ENCODE measurements at regions of chr4 and their contacts with region 1.

Region 1: DNA sequence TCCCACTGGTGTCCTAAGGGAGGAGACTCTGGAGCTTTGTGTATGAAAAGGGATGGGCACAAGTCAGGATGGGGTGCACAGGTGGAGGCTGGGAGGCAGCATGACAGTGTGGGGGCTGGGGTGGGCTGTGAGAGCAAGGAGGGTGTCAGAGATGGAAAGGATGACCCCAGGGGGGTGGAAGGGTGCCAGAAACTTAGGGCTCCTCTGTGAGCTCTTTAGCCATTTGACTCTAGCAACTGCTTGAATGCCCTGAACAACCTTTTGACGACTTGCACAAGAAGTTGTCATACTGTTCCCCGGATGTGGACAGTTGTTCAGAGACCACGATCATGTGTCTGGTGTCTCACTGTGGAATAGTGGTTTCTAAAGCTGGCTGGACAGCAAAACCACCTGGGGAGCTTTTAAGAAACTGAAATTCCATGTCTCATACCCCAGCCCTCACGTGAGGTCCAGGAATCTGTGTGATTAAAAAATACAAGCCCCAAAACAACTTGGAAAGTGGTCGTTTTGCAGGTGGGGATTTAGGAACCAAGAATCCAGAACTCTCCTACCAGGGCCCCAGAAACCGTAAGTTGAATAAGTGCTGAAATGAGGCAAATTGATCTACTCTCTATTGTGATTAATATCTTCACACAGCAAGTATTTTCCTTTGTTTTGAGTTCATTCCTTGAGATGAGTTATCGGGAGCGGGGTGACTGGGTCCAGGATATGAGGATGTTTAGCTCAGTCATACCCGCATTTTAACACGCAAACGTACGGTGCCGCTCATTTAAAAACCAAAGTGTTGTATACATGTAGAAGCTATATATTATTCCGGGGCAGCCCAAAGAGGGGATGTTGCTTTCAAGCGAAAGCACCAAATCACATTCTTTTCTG is 3.4 kb downstream of the RHOH start:
- DNase-seq: peak; percentile 88
- H3K4me3 Mint-ChIP-seq: peak overlapping the region; percentile 85
- H3K27ac Mint-ChIP-seq: peak overlapping the region; percentile 98
- H3K4me1 Mint-ChIP-seq: peaks cover 31% of the 10 kb centered on the region
- H3K27me3 Mint-ChIP-seq: no peaks in the 10 kb centered on the region

Region 2: DNA sequence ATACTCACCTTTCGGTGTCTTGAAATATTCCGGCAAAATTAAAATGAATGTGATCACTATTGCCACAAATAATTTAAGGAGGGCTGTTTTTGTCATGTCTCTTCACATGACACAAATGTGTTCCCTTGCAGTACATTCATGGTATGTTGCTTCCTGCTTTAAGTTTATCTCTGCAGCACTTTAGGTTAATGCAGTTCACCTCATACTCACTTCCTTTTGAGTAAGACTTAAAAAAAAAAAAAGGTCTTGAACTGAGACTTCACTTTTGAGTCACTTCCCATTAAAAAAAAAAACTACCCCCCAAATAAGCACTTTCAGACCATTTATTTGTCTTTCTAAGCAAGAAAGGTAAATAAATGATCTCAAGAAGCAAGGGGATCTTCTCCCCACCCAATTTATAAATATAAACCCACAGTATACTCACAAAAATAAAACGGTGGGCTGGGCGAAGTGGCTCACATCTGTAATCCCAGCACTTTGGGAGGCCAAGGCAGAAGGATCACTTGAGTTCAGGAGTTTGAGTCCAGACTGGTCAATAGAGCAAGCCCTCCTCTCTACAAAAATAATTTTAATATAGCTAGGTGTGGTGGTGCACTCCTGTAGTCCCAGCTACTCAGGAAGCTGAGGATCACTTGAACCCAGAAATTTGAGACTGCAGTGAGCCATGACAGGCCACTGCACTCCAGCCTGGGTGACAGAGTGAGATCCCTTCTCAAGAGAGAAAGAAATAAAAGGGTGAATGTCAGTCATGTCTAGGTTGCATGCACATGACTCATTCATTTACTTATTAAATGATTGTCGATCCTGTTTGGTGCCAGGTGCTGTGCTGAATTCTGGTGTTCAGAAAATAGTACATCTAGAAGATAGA is 1167.8 kb before region 1 on chr4 and contains the start of gene TMEM156:
- CTCF ChIA-PET with region 1: no interaction called
- intact Hi-C with region 1: loop called (anchors 5 kb)
- DNase-seq: peak; percentile 65
- H3K4me3 Mint-ChIP-seq: peak within 1 kb of the TSS; percentile 77
- H3K27ac Mint-ChIP-seq: peak within 1 kb of the TSS; percentile 89
- H3K4me1 Mint-ChIP-seq: peaks cover 57% of the 10 kb centered on the region
- H3K27me3 Mint-ChIP-seq: no peaks in the 10 kb centered on the region
- total RNA-seq, gene TMEM156: 10.2 to 11.3 TPM

Region 3: GRCh38 chr4:40056716-40057585 is 143.3 kb before region 1 on chr4 and contains the start of gene N4BP2:
- CTCF ChIA-PET with region 1: interaction called, 4 read pairs
- intact Hi-C with region 1: loop called (anchors 1 kb)
- DNase-seq: peak; percentile 71
- H3K4me3 Mint-ChIP-seq: peak within 1 kb of the TSS; percentile 93
- H3K27ac Mint-ChIP-seq: peak within 1 kb of the TSS; percentile 95
- H3K4me1 Mint-ChIP-seq: peaks cover 30% of the 10 kb centered on the region
- H3K27me3 Mint-ChIP-seq: no peaks in the 10 kb centered on the region
- total RNA-seq, gene N4BP2: 17.5 to 18.8 TPM

Region 4: GRCh38 chr4:40140196-40140595 is 60.0 kb before region 1 on chr4:
- CTCF ChIA-PET with region 1: no interaction called
- intact Hi-C with region 1: no loop called
- DNase-seq: no peak
- H3K4me3 Mint-ChIP-seq: no peak overlapping the region
- H3K27ac Mint-ChIP-seq: no peak overlapping the region
- H3K4me1 Mint-ChIP-seq: peaks cover 16% of the 10 kb centered on the region
- H3K27me3 Mint-ChIP-seq: no peaks in the 10 kb centered on the region

Region 5: DNA sequence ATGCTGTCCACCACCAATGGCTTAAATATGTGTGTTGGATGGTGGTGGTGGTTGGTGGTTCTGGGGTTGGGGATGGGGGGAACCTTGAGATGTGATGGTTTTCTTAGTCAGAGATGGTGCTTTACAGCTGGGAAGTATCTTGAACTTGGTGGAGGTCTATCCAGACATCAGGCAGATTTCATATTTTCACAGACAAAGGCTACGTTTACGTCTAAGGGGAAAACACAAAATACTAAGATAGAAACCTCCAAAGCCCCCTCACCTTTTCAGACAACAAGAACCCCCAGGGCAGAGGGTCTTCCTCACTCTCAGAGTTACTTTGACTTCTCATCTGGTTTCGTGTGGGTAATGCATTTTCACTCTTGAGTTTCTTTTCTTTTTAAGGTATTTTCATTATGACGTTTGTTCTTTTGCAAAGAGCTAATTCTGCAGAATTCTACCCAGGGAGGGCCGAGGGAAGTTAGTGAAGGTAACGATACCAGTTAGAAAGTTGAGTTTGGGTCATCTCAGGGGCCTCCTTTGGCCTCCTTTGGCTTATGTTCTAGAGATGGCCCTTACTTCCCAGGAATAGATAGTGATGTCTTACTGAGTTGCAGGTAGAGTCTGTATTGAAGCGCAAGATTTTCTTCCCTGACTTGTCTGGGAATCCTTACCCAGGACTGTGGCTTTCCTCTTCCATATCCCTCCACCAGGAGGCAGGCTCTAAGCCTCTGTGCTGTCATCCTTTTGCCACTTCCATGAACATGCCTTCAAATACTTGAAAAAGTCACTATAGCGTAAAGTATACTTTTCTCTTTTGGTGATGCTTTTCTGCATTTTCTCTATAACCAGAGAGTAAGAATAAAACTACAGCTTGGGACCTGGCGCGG is 28.5 kb after region 1 on chr4:
- CTCF ChIA-PET with region 1: interaction called, 5 read pairs
- intact Hi-C with region 1: loop called (anchors 1 kb)
- DNase-seq: peak; percentile 24
- H3K4me3 Mint-ChIP-seq: peak overlapping the region; percentile 53
- H3K27ac Mint-ChIP-seq: peak overlapping the region; percentile 85
- H3K4me1 Mint-ChIP-seq: peaks cover 94% of the 10 kb centered on the region
- H3K27me3 Mint-ChIP-seq: no peaks in the 10 kb centered on the region

Region 6: DNA sequence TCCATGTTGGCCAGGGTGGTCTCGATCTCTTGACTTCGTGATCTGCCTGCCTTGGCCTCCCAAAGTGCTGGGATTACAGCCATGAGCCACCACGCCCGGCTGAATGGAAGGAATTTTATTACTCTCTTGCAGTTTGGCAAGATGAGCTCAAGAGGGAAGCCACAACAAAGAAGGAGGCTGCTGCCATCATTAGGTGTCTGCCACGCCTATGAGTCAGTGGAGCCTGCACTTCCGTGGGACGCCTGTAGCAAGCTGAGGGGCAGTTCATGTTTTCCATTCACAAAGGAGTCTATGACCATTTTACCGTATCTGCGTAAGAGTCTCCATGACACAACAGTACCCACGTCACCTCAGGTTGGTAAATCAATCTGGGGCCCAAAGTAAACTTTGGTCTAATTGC is 83.7 kb after region 1 on chr4:
- CTCF ChIA-PET with region 1: interaction called, 5 read pairs
- intact Hi-C with region 1: loop called (anchors 1 kb)
- DNase-seq: peak; percentile 94
- H3K4me3 Mint-ChIP-seq: peak overlapping the region; percentile 19
- H3K27ac Mint-ChIP-seq: peak overlapping the region; percentile 94
- H3K4me1 Mint-ChIP-seq: peaks cover 70% of the 10 kb centered on the region
- H3K27me3 Mint-ChIP-seq: no peaks in the 10 kb centered on the region

Region 7: DNA sequence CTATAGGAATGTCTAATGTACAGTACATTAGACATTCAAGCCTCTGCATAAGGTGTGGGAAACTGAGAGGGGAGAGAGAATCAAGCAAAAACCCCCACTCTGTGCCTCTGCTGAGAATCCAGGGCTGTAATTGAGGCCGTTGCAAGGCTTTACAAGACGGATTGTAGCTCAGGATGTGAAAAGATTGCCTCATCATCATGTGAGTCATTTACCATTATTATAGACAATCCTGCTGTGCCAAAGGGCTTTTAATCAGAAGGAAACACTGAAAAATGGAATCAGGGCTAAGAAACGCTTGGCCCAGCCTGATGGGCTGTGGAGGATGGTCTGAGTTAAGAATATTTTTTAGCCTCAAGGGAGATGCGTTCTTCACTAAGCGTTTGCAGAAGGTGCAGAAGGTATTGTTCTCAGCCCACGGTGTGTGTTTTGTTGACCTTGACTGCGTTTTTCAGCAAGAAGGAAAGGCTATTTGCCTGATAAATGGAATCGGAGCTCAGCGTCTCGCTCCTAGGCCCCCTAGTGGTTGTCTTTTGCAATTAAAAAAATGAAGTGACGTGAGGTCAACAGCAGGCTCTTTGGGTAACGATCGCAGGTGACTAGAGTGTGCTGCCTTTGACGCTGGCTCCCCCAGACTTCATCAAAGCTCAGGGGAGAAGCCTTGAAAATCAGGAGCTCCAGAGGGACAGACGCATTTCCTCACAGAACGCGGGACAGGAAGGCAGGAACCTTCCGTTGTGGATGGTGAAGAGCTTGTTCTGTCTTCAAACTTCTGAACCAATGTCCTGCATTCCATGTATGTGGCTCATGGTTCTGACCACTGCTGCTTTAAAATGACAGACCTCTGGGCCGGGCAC is 116.8 kb after region 1 on chr4:
- CTCF ChIA-PET with region 1: interaction called, 9 read pairs
- intact Hi-C with region 1: loop called (anchors 1 kb)
- DNase-seq: peak; percentile 71
- H3K4me3 Mint-ChIP-seq: peak overlapping the region; percentile 86
- H3K27ac Mint-ChIP-seq: peak overlapping the region; percentile 100
- H3K4me1 Mint-ChIP-seq: peaks cover 49% of the 10 kb centered on the region
- H3K27me3 Mint-ChIP-seq: no peaks in the 10 kb centered on the region

Region 8: DNA sequence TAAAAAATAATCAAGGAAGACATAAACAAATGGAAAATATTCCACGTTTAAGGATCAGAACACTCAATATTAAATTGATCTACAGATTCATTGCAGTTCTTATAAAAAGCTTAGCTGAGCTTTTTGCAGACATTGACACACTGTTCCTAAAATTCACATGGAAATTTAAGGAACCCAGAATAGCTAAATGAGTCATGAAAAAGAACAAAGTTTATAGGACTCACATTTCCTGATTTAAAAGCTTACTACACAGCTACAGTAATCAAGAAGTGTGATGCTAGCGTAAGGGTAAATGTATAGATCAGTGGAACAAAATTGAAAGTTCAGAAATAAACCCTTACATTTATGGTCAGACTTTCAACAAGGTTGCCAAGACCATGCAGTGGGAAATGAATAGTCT is 582.6 kb after region 1 on chr4:
- CTCF ChIA-PET with region 1: no interaction called
- intact Hi-C with region 1: no loop called
- DNase-seq: no peak
- H3K4me3 Mint-ChIP-seq: no peak overlapping the region
- H3K27ac Mint-ChIP-seq: no peak overlapping the region
- H3K4me1 Mint-ChIP-seq: no peaks in the 10 kb centered on the region
- H3K27me3 Mint-ChIP-seq: peaks cover 8% of the 10 kb centered on the region

Region 9: GRCh38 chr4:40908702-40909362 is 708.6 kb after region 1 on chr4:
- CTCF ChIA-PET with region 1: no interaction called
- intact Hi-C with region 1: loop called (anchors 1 kb)
- DNase-seq: peak; percentile 89
- H3K4me3 Mint-ChIP-seq: peak overlapping the region; percentile 22
- H3K27ac Mint-ChIP-seq: peak overlapping the region; percentile 90
- H3K4me1 Mint-ChIP-seq: peaks cover 41% of the 10 kb centered on the region
- H3K27me3 Mint-ChIP-seq: no peaks in the 10 kb centered on the region